B cell (primary cell): ENCODE measurements at regions of chr4 and their contacts with region 1.

Region 1: DNA sequence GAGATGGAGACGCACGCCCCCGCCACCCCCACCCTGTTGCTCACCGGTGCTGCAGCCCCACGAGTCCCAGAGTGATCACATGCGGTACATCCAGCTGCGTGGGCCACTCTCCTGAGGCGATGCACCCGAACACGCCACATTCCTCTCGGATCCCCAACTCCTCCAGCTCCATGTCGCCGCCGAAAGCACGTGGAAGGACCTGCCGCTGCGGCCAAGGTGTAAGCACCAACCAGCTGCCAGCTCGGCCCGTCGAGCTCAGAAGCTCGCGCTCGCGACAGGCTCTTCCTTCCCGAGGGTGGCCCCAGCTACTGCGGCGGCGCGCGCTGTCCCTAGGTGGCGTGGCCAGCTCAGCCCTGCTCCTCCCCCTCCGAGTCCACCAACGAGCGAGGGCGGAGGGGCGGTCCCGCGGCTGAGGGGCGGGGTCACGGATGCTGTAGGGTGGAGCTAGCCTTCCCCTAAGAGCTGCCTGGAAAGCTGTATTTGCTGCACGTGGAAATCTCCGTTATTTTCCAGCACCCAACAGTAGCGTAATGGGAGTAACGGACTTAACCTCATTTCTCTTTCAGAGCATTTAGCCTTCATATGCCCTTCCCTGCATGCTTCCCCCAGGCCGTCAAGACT is at the start of gene PPAT:
- DNase-seq: peak; percentile 99
- ATAC-seq: peak; percentile 84
- H3K4me3 ChIP-seq: peak within 1 kb of the TSS; percentile 82 to 97 (median 92)
- H3K4me3 Mint-ChIP-seq: peak within 1 kb of the TSS; percentile 96
- H3K27ac ChIP-seq: peak within 1 kb of the TSS; percentile 77 to 83
- H3K27ac Mint-ChIP-seq: peak within 1 kb of the TSS; percentile 99
- H3K4me1 ChIP-seq: peaks cover 16 to 22% of the 10 kb centered on the region in 2 donors
- H3K4me1 Mint-ChIP-seq: peaks cover 29% of the 10 kb centered on the region
- H3K27me3 ChIP-seq: no peaks in the 10 kb centered on the region
- H3K27me3 Mint-ChIP-seq: no peaks in the 10 kb centered on the region
- CTCF ChIP-seq: peak; percentile 19
- total RNA-seq, gene PPAT: 6.7 and 9.2 TPM in 2 replicates

Region 2: DNA sequence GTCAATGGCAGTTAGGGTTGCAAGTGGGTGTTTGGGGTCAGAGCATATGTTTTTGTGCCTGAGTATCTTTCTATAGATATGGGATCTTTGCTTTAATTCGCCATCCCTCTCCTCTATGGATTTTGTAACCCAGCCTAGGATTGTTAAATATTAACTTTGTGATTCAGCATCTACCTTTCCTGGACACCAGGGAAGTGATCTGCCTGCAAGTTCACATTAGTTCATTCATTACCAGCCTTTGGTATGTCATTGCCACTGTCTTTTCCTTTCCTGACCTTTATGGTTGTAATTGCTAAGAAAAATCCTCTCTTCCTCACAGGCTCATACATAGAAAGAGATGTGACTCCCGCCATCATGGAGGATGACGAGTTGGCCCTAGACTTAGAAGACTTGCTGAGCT is 1703.9 kb before region 1 on chr4:
- CTCF ChIA-PET with region 1: no interaction called
- POLR2A ChIA-PET with region 1: no interaction called
- intact Hi-C with region 1: no loop called
- DNase-seq: no peak
- ATAC-seq: no peak
- H3K4me3 ChIP-seq: no peak overlapping the region
- H3K4me3 Mint-ChIP-seq: no peak overlapping the region
- H3K27ac ChIP-seq: no peak overlapping the region
- H3K27ac Mint-ChIP-seq: no peak overlapping the region
- H3K4me1 ChIP-seq: peaks cover 14 to 27% of the 10 kb centered on the region in 2 donors
- H3K4me1 Mint-ChIP-seq: peaks cover 23% of the 10 kb centered on the region
- H3K27me3 ChIP-seq: no peaks in the 10 kb centered on the region
- H3K27me3 Mint-ChIP-seq: peaks cover 4% of the 10 kb centered on the region
- CTCF ChIP-seq: no peak

Region 3: DNA sequence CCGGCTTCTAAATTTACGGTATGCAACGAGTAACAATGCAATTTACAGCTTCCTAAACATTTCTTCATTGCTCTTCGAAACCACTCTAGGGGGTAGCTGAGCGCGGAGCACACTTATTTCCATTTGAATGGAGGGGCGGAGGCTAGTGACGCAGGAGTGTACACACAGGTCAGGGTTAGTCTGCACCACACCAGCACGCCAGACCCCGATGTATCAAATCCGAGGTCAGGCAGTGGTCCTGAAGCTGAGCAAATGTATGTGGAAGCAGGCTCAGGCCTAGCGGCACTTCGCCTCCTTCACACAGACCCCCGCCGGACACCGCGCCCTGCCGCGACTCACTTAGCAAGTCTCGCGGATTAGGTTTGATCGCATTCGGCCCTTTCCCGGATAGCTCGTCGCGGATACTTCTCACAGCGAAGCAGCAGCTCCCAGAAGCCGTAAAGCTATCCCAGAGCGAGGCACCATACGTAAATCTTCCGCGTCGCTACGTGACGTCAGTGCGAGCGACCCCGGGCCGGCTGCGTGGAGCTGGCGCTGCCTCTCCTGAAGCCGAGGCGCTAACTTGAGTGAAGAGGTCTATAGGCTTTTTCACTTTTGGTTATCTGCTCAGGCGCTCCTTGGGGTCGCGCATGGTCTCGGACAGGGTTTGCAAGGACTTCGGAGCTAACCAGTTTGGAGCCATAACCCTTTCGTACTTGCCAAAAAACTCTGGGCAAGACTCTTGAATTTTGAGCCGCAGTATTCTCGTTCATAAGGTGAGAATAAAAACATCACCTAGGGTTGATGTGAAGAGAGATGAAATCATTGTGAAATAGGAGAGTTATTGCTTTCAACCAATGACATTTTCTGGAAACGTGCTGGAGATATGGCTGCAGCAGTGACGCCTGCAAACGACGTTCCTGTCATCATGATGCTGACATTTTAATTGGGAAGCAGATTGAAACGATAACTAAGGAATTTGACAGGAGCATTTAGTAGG is 48.1 kb before region 1 on chr4 and contains the start of gene AASDH:
- CTCF ChIA-PET with region 1: interaction called, 12 read pairs
- POLR2A ChIA-PET with region 1: interaction called, 27 read pairs
- intact Hi-C with region 1: loop called (anchors 1 kb)
- DNase-seq: peak; percentile 97
- ATAC-seq: peak; percentile 94
- H3K4me3 ChIP-seq: peak within 1 kb of the TSS; percentile 57 to 97 (median 81)
- H3K4me3 Mint-ChIP-seq: peak within 1 kb of the TSS; percentile 88
- H3K27ac ChIP-seq: peak within 1 kb of the TSS; percentile 86 to 89
- H3K27ac Mint-ChIP-seq: peak within 1 kb of the TSS; percentile 99
- H3K4me1 ChIP-seq: peaks cover 14% of the 10 kb centered on the region in 2 donors
- H3K4me1 Mint-ChIP-seq: peaks cover 30% of the 10 kb centered on the region
- H3K27me3 ChIP-seq: no peaks in the 10 kb centered on the region
- H3K27me3 Mint-ChIP-seq: no peaks in the 10 kb centered on the region
- CTCF ChIP-seq: no peak
- total RNA-seq, gene AASDH: 15.2 and 17.2 TPM in 2 replicates

Region 4: DNA sequence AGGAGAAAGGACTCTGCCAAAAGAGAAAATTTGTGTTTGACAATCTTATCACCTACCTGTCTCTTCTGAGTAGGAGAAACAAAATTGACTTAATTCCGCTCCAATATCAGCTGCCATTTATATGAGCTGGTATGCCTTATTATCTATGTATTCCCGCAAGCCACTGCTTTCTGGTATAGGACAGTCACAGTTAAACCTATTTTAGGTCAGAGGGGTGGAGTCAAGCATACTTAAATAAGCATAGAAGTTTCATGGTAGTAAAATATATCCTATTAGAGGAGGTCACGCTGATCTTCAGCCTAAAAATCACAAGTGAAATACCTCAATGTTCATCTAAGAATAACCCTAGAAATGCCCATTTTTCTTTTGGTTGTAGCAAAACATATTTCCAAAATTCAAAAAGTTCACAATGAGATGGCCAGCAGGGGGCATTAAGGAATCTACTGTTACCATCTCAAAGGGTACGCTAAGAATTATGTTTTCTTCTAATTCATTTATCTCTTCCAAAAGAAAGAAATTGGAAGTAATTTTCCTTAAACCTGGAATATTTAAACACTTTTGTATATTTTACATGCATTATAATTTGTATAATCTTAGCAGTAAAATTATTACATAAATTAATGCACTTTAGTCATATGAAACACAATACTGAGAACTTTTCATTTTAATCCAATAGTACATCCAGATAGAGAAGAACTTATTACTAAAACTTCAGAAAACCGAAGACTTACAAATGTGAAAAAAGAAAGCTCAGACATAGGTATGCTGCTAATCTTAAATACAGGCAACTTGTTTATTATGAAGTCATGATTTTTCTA is 10.5 kb before region 1 on chr4:
- CTCF ChIA-PET with region 1: interaction called, 62 read pairs
- POLR2A ChIA-PET with region 1: no interaction called
- intact Hi-C with region 1: no loop called
- DNase-seq: peak; percentile 67
- ATAC-seq: no peak
- H3K4me3 ChIP-seq: no peak overlapping the region
- H3K4me3 Mint-ChIP-seq: no peak overlapping the region
- H3K27ac ChIP-seq: no peak overlapping the region
- H3K27ac Mint-ChIP-seq: no peak overlapping the region
- H3K4me1 ChIP-seq: no peaks in the 10 kb centered on the region
- H3K4me1 Mint-ChIP-seq: peaks cover 9% of the 10 kb centered on the region
- H3K27me3 ChIP-seq: no peaks in the 10 kb centered on the region
- H3K27me3 Mint-ChIP-seq: no peaks in the 10 kb centered on the region
- CTCF ChIP-seq: peak; percentile 85

Region 5: DNA sequence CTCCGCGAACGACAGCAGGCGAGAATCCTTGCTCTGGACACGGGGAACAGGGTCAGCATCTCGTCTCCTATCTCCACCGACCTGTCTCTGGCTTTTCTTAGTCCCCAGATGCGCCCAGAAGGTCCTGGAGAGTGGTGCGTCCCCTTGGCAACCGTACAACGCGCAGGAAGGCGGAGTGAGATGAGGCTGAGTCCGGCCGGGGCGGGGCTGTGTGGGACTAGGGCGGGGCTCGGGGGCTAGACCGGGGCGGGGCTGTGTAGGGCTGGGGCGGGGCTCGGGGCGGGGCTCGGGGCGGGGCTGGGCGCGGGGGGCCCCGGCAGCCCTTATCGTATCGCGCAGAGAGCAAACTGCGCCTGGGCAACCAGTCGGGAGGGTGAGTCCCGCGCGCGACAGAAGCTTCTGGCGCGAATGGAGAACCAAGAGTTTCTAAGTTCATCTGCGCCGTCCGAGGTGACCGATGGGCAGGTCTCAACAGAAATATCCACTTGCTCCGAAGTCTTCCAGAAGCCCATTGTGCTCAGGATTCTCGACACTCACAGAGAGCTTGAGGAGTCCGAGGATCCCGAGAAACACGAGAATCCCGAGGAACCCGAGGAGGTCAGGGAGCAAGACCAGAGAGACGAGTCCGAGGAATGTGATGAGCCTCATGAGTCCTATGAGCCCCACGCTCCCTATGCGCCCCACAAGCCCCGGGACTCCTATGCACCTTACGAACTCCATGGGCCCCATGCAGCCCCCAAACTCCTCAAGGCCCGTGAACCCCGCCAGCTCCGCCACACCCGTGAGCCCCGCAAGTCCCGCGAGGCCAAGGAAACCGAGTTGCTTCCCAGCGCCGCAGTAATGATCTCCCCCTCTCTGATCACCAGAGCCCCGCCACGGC is 95.1 kb after region 1 on chr4:
- CTCF ChIA-PET with region 1: no interaction called
- POLR2A ChIA-PET with region 1: no interaction called
- intact Hi-C with region 1: loop called (anchors 1 kb)
- DNase-seq: peak; percentile 82
- ATAC-seq: peak; percentile 100
- H3K4me3 ChIP-seq: peak overlapping the region; percentile 56 to 77 (median 73)
- H3K4me3 Mint-ChIP-seq: no peak overlapping the region
- H3K27ac ChIP-seq: no peak overlapping the region
- H3K27ac Mint-ChIP-seq: peak overlapping the region; percentile 12
- H3K4me1 ChIP-seq: peaks cover 7 to 12% of the 10 kb centered on the region in 2 donors
- H3K4me1 Mint-ChIP-seq: peaks cover 4% of the 10 kb centered on the region
- H3K27me3 ChIP-seq: peaks cover 0 to 36% (median 22%) of the 10 kb centered on the region in 4 experiments
- H3K27me3 Mint-ChIP-seq: peaks cover 7% of the 10 kb centered on the region
- CTCF ChIP-seq: no peak

Region 6: GRCh38 chr4:56821381-56822243 is 386.2 kb after region 1 on chr4 and contains the start of gene SPINK2:
- CTCF ChIA-PET with region 1: no interaction called
- POLR2A ChIA-PET with region 1: no interaction called
- intact Hi-C with region 1: loop called (anchors 1 kb)
- DNase-seq: peak; percentile 82
- ATAC-seq: peak; percentile 90
- H3K4me3 ChIP-seq: peak within 1 kb of the TSS; percentile 36 to 66 (median 62)
- H3K4me3 Mint-ChIP-seq: peak within 1 kb of the TSS; percentile 83
- H3K27ac ChIP-seq: no peak within 1 kb of the TSS
- H3K27ac Mint-ChIP-seq: peak within 1 kb of the TSS; percentile 8
- H3K4me1 ChIP-seq: peaks cover 26 to 32% of the 10 kb centered on the region in 2 donors
- H3K4me1 Mint-ChIP-seq: peaks cover 35% of the 10 kb centered on the region
- H3K27me3 ChIP-seq: peaks cover 0 to 18% (median 4%) of the 10 kb centered on the region in 4 experiments
- H3K27me3 Mint-ChIP-seq: peaks cover 4% of the 10 kb centered on the region
- CTCF ChIP-seq: peak; percentile 37
- total RNA-seq, gene SPINK2: 0.63 and 0.94 TPM in 2 replicates

Region 7: DNA sequence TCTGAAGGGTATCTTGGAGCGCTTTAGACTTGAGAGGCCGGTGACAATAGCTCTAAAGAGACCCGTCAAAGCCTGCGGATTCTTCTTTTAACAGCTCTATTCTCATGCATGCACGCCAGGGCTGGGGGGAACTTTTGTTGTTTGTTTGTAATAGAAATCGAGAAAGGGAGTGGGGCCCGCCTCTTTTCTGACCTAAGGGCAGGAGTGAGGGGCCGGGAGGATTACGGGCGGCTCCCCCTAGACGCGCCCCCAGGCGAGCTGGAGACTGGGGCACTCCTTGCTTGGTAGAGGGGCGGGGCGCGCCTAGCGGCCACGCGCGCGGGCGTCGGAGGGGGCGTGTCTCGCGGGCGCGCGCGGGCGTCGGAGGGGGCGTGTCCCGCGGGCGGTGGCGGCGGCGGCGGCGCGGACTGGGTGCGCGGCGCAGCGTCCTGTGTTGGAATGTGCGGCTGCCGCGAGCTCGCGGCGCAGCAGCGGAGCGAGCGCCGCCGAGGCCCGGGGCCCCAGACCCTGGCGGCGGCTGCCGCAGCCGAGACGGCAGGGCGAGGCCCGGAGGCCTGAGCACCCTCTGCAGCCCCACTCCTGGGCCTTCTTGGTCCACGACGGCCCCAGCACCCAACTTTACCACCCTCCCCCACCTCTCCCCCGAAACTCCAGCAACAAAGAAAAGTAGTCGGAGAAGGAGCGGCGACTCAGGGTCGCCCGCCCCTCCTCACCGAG is 472.2 kb after region 1 on chr4 and contains the start of gene REST:
- CTCF ChIA-PET with region 1: interaction called, 9 read pairs
- POLR2A ChIA-PET with region 1: interaction called, 3 read pairs
- intact Hi-C with region 1: loop called (anchors 1 kb)
- DNase-seq: peak; percentile 92
- ATAC-seq: peak; percentile 65
- H3K4me3 ChIP-seq: peak within 1 kb of the TSS; percentile 62 to 98 (median 88)
- H3K4me3 Mint-ChIP-seq: peak within 1 kb of the TSS; percentile 93
- H3K27ac ChIP-seq: peak within 1 kb of the TSS; percentile 47 to 77
- H3K27ac Mint-ChIP-seq: peak within 1 kb of the TSS; percentile 92
- H3K4me1 ChIP-seq: peaks cover 29 to 35% of the 10 kb centered on the region in 2 donors
- H3K4me1 Mint-ChIP-seq: peaks cover 42% of the 10 kb centered on the region
- H3K27me3 ChIP-seq: no peaks in the 10 kb centered on the region
- H3K27me3 Mint-ChIP-seq: peaks cover 3% of the 10 kb centered on the region
- CTCF ChIP-seq: no peak
- total RNA-seq, gene REST: 59.4 and 61.1 TPM in 2 replicates

Region 8: DNA sequence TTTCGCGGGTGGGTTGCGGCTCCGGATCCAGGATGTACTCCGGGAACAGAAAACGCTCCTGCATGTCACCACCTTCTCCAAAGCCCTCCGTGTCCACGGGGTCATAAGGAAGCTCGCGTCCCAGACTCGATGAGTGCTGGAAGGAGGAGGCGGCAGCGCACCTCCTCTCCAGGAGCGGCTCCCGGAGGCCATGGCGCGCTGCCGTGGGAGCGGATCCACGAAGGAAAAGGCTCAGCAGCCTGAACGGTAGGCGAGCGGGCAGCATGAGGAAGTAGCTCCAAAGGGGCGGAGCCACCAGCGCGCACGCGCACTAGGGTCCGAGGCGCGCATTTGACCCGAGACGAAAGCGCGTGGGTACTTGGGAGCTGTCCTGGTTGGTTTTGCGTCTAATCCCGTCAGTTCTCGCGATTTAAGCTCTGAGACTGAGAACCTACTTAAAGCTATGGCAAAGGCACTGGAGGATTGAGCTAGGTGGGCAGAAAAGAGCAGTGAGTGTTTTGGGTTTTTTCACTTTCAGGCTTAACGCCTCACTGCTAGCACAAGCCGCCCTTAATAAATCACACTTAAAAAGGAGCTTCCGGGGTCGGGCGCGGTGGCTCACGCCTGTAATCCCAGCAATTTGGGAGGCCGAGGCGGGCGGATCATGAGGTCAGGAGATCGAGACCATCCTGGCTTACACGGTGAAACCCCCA is 542.1 kb after region 1 on chr4 and contains the start of gene NOA1:
- CTCF ChIA-PET with region 1: interaction called, 5 read pairs
- POLR2A ChIA-PET with region 1: interaction called, 10 read pairs
- intact Hi-C with region 1: loop called (anchors 1 kb)
- DNase-seq: peak; percentile 99
- ATAC-seq: peak; percentile 82
- H3K4me3 ChIP-seq: peak within 1 kb of the TSS; percentile 74 to 95 (median 91)
- H3K4me3 Mint-ChIP-seq: peak within 1 kb of the TSS; percentile 100
- H3K27ac ChIP-seq: peak within 1 kb of the TSS; percentile 73 to 84
- H3K27ac Mint-ChIP-seq: peak within 1 kb of the TSS; percentile 98
- H3K4me1 ChIP-seq: peaks cover 35 to 40% of the 10 kb centered on the region in 2 donors
- H3K4me1 Mint-ChIP-seq: peaks cover 57% of the 10 kb centered on the region
- H3K27me3 ChIP-seq: no peaks in the 10 kb centered on the region
- H3K27me3 Mint-ChIP-seq: no peaks in the 10 kb centered on the region
- CTCF ChIP-seq: no peak
- total RNA-seq, gene NOA1: 22.7 and 24.0 TPM in 2 replicates